ENCODE measurements at regions of chr21 and their contacts with region 1.

Region 1: DNA sequence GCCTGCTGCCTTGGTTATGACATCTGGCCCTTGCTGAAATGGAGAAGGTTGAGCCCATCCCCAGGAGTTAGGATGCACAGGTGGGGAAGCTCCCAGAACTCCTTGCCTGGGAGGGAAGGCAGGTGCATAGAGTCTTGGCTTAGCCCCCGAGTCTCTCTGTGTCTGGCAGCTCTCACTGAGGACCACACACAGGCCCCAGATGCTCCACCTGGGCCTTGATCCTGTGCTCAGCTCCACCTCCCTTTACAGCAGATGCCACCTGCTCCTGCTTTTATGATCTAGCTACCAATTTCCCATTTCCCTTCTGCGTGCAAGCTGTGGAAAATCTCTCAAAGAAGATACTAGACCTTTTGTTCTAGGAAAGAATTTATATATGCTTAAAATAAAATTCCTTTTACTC is 28.8 kb upstream of the KCNJ6 start:
- DNase-seq: no peak
- ATAC-seq: no peak
- H3K4me3 ChIP-seq: no peak overlapping the region
- H3K27ac ChIP-seq: no peak overlapping the region
- H3K4me1 ChIP-seq: no peaks in the 10 kb centered on the region
- H3K27me3 ChIP-seq: peaks cover 4% of the 10 kb centered on the region
- CTCF ChIP-seq: no peak
- POLR2A ChIP-seq: no peak
- RAD21 ChIP-seq: no peak

Region 2: GRCh38 chr21:39461419-39461818 is 1516.4 kb after region 1 on chr21:
- CTCF ChIA-PET with region 1: no interaction called
- POLR2A ChIA-PET with region 1: no interaction called
- dilution Hi-C with region 1: no loop called
- in situ Hi-C with region 1: no loop called
- intact Hi-C with region 1: loop called (anchors 5 kb)
- DNase-seq: no peak
- ATAC-seq: no peak
- H3K4me3 ChIP-seq: no peak overlapping the region
- H3K27ac ChIP-seq: no peak overlapping the region
- H3K4me1 ChIP-seq: no peaks in the 10 kb centered on the region
- H3K27me3 ChIP-seq: no peaks in the 10 kb centered on the region
- CTCF ChIP-seq: no peak
- POLR2A ChIP-seq: no peak
- RAD21 ChIP-seq: no peak

Measured in IMR-90 (cell line).